CD8-positive, alpha-beta memory T cell (primary cell): ENCODE measurements at regions of chr5 and their contacts with region 1.

Region 1: DNA sequence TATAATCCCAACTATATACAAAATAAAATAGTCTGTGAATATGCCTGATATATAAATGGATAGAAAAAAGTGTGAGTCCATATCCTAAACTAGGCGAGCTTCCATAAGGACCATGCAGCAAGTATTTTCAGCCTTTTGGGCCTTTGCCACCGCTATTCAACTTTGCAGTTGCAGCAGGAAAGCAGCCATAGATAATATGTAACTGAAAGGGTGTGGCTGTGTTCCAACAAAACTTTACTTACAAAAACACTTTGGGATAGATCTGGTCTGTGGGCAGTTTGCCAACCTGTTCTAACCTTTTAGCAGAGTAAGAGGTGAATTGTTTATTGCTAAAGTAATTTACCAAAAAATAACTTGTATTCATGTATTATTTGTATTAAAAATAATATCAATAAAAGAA is 127.8 kb upstream of the GPR151 start:
- DNase-seq: no peak
- H3K4me3 ChIP-seq: no peak overlapping the region
- H3K4me3 Mint-ChIP-seq: no peak overlapping the region
- H3K27ac ChIP-seq: no peak overlapping the region
- H3K27ac Mint-ChIP-seq: no peak overlapping the region
- H3K4me1 ChIP-seq: no peaks in the 10 kb centered on the region
- H3K4me1 Mint-ChIP-seq: no peaks in the 10 kb centered on the region
- H3K27me3 ChIP-seq: no peaks in the 10 kb centered on the region
- H3K27me3 Mint-ChIP-seq: peaks cover 0 to 2% of the 10 kb centered on the region in 2 donors

Region 2: DNA sequence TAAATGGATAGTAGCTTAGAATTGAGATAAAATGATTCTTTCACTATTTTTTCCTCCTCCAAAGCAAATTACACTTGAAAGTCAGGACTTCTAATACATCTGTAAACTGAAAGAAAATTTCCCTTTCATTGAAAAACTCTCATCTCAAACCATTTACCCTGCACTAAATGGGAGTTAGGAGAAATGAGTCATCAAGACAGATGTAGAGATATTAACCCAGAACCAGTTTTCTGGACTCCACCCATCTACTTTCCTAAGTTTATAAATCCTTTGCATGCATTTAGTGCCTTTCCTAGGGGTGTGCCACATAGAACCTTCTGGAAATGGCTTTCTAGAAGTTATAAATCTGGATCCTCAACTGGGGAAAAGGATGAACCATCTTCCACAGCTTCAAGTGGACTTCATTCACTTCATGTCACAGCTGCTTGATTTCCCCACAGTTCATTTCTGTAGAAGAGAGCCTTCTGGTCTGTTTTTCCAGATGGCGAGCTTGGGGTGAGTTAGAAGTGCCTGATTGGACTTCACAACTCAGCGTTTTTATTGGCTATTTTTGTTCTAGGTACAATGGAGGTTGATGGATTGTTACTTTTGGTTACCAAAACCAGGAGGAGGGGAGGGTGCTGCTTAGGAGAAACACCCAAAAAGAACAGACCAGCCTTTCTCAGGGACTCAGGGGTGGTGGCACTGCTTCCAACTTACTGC is 55.3 kb before region 1 on chr5:
- CTCF ChIA-PET with region 1: no interaction called
- POLR2A ChIA-PET with region 1: no interaction called
- DNase-seq: no peak
- H3K4me3 ChIP-seq: no peak overlapping the region
- H3K4me3 Mint-ChIP-seq: no peak overlapping the region
- H3K27ac ChIP-seq: no peak overlapping the region
- H3K27ac Mint-ChIP-seq: peak overlapping the region in 1 of 8 donors; percentile 65
- H3K4me1 ChIP-seq: no peaks in the 10 kb centered on the region
- H3K4me1 Mint-ChIP-seq: no peaks in the 10 kb centered on the region
- H3K27me3 ChIP-seq: no peaks in the 10 kb centered on the region
- H3K27me3 Mint-ChIP-seq: no peaks in the 10 kb centered on the region

Region 3: DNA sequence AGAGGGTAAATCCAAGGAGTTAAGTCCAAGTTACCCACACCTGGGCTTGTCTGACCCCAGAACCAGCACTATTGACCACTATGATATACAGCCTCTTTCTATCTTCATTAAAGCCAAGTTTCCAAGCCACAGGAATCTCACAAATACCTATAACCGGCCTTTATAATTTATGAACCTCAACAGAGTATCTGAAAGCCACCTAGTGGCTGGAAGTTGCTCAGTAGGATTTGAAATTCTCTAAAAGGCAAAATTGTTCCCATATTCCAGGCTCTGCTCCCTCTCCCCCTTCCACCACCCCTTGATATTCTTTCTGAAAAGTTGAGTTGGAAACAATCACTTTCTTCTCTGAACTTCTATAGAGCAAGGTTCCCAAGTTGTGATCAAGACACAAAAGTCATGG is 21.4 kb before region 1 on chr5:
- CTCF ChIA-PET with region 1: no interaction called
- POLR2A ChIA-PET with region 1: no interaction called
- DNase-seq: no peak
- H3K4me3 ChIP-seq: no peak overlapping the region
- H3K4me3 Mint-ChIP-seq: no peak overlapping the region
- H3K27ac ChIP-seq: no peak overlapping the region
- H3K27ac Mint-ChIP-seq: no peak overlapping the region
- H3K4me1 ChIP-seq: no peaks in the 10 kb centered on the region
- H3K4me1 Mint-ChIP-seq: no peaks in the 10 kb centered on the region
- H3K27me3 ChIP-seq: no peaks in the 10 kb centered on the region
- H3K27me3 Mint-ChIP-seq: no peaks in the 10 kb centered on the region

Region 4: GRCh38 chr5:146662229-146662628 is 18.5 kb after region 1 on chr5:
- CTCF ChIA-PET with region 1: interaction called, 3 read pairs
- POLR2A ChIA-PET with region 1: interaction called, 10 read pairs
- DNase-seq: peak in 2 of 5 donors; percentile 35 to 36
- H3K4me3 ChIP-seq: no peak overlapping the region
- H3K4me3 Mint-ChIP-seq: no peak overlapping the region
- H3K27ac ChIP-seq: no peak overlapping the region
- H3K27ac Mint-ChIP-seq: no peak overlapping the region
- H3K4me1 ChIP-seq: peaks cover 4% of the 10 kb centered on the region
- H3K4me1 Mint-ChIP-seq: peaks cover 0 to 5% (median 4%) of the 10 kb centered on the region in 3 donors
- H3K27me3 ChIP-seq: no peaks in the 10 kb centered on the region
- H3K27me3 Mint-ChIP-seq: no peaks in the 10 kb centered on the region